ENCODE measurements at regions of chr14 and their contacts with region 1.

Region 1: DNA sequence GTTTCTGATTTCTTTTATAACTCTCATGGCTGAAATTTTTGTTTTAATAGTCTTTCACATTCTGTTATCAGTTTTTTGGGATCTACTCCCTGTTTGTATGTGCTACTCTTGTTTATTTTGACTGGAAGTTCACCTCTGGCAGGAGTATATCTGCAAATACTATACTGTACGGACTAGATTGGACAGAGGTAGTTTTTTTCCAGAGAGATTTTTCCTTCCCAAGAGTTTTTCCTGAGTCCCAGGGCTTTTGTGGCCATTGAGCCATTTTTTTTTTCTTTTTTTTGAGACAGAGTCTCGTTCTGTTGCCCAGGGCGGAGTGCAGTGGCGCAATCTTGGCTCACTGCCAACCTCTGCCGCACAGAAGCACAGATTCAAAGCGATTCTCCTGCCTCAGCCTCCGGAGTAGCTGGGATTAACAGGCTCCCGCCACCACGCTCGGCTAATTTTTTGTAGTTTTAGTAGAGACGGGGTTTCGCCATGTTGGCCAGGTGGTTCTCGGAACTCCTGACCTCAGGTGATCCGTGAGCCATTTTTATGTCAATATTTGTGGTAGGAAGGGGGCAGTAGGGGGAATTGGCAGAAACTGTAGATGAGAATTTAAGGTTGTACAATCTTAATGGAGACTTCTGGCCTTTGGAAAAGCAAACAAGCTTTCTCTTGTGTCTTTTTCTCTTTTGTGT is 19.3 kb downstream of the KTN1 start:
- DNase-seq: no peak

Region 2: DNA sequence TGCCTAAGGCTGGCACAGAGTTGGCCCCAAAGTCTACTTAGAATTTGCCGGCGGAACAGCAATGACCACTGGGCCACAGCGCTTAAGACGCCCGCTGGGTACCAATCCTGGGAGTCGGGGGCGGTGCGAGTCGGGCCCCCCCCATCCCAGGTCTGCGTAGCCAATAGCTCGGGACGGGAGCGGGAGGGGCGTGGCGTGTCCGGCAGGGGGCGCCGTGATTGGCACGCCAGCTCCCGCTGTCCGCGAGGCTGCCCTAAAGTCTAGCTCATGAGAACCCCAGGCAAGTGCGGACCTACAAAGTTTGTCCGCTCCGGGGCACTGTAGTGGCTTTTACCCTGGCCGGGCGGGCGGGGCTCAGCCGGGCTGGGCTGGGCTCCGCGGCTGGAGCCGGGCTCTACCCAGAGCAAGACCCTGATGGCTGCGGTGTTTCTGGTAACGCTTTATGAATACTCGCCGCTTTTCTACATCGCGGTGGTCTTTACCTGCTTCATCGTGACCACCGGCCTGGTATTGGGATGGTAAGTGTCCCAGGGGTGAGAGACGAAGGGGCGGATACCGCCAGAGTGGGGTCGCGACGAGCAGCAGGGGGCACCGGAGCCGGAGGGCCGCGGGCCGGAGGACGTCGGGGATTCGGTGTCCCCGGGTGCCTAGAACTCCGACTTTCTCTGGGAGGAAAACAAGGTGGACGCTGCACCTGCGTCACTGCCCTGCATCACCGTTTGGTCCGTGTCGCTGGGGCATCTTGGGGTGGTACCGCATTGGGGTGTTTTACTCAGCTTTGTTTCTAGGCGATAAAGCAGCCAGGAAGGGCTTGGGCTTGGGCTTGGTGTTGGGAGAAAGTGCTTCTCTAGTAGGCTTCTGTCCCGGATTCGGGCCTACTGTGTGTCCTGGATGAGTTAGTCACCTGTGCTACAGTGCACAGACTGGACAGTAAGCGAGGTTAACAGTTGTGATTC is 1089.5 kb before region 1 on chr14 and contains the start of gene CGRRF1:
- intact Hi-C with region 1: loop called in 1 of 2 experiments (anchors 5 kb)
- DNase-seq: peak; percentile 99
- total RNA-seq, gene CGRRF1: 27.5 to 32.6 TPM

Region 3: DNA sequence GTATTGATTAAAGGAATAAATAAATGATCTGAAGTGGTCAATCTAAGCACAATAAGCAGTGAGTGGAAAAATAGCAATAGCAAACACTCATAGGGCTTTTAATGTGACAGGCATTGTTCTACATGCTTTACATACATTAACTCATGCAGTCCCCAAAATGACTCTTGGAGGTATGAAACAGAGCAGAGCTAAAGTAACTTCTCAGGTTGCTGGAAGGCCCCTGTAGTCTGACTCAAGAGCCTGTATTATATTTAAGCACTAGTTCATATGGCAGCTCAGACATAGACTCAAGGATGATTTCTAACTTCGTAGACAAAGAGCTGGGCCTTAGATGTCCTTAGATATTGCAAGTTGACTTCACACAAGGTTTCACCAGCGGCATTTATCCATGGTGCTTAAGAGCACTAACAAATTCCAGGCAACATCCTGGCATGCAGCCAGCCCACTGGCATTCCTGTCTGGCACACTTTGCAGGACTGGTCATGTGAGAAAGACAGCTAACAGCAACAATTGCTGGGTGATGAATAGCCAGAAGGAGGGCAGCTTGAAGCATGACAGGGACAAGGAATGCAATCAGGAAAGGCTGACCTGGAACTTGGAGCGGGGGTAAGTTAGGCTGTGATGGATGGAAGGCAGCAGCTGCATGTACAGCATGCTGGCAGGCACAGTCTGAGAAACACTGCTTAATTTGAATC is 42.3 kb before region 1 on chr14:
- intact Hi-C with region 1: no loop called
- DNase-seq: no peak

Measured in posterior vena cava (tissue), 2 donors.